CD4-positive, alpha-beta memory T cell (primary cell): ENCODE measurements at regions of chr2 and their contacts with region 1.

Region 1: GRCh38 chr2:177263451-177264208 is 897 bp downstream of the NFE2L2 start:
- DNase-seq: peak; percentile 93 to 97 (median 94)
- H3K4me3 ChIP-seq: peak overlapping the region; percentile 57 to 100
- H3K4me3 Mint-ChIP-seq: peak overlapping the region; percentile 93 to 98 (median 96)
- H3K27ac ChIP-seq: peak overlapping the region; percentile 100
- H3K27ac Mint-ChIP-seq: peak overlapping the region; percentile 94 to 100 (median 99)
- H3K4me1 ChIP-seq: peaks cover 59% of the 10 kb centered on the region
- H3K4me1 Mint-ChIP-seq: peaks cover 36 to 75% (median 53%) of the 10 kb centered on the region in 4 donors
- H3K27me3 ChIP-seq: no peaks in the 10 kb centered on the region
- H3K27me3 Mint-ChIP-seq: no peaks in the 10 kb centered on the region

Region 2: DNA sequence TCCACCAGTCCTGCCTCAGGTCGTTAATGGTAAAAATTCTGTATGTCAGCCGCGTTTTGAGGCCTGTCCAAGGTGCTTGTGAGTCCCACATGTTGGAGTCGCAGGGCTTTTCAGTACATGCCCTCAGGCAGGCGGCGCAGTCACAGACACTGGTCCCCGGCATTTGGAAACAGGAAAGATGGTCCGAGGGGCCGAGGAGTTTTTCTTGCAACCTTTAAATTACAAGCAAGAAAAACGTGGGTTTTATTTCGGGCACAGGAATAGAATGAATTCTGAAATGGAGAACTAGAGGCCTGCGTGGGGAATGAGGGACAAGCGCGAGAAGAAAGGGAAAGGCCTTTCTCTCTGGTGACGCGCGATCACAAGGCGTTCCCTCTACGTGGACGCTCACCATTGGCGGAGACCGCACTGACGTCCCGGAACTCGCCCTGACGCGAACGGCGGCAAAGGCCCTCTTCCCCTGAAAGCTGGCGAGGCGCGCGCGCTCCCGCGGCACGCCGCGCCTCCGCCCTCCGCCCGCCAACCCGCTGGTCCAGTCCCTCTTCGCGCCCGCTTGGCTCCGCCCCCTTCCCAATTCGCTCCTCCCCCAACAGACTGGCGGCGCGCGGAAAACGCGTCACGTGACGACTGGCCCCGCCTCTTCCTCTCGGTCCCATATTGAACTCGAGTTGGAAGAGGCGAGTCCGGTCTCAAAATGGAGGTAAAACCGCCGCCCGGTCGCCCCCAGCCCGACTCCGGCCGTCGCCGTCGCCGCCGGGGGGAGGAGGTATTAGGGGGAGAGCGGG is 51.3 kb before region 1 on chr2 and contains the start of gene HNRNPA3:
- CTCF ChIA-PET with region 1: interaction called, 35 read pairs
- POLR2A ChIA-PET with region 1: interaction called, 260 read pairs
- intact Hi-C with region 1: loop called (anchors 1 kb)
- DNase-seq: peak; percentile 99 to 100 (median 100)
- H3K4me3 ChIP-seq: peak within 1 kb of the TSS; percentile 98 to 99
- H3K4me3 Mint-ChIP-seq: peak within 1 kb of the TSS; percentile 86 to 98 (median 95)
- H3K27ac ChIP-seq: peak within 1 kb of the TSS; percentile 100
- H3K27ac Mint-ChIP-seq: peak within 1 kb of the TSS; percentile 98 to 100 (median 99)
- H3K4me1 ChIP-seq: peaks cover 55% of the 10 kb centered on the region
- H3K4me1 Mint-ChIP-seq: peaks cover 26 to 66% (median 38%) of the 10 kb centered on the region in 4 donors
- H3K27me3 ChIP-seq: no peaks in the 10 kb centered on the region
- H3K27me3 Mint-ChIP-seq: no peaks in the 10 kb centered on the region
- total RNA-seq, gene HNRNPA3: 172 to 175 TPM

Region 3: GRCh38 chr2:177247693-177248262 is 15.9 kb before region 1 on chr2:
- CTCF ChIA-PET with region 1: interaction called, 28 read pairs
- POLR2A ChIA-PET with region 1: interaction called, 51 read pairs
- intact Hi-C with region 1: no loop called
- DNase-seq: no peak
- H3K4me3 ChIP-seq: no peak overlapping the region
- H3K4me3 Mint-ChIP-seq: no peak overlapping the region
- H3K27ac ChIP-seq: no peak overlapping the region
- H3K27ac Mint-ChIP-seq: peak overlapping the region in 3 of 7 donors; percentile 13 to 60 (median 47)
- H3K4me1 ChIP-seq: peaks cover 79% of the 10 kb centered on the region
- H3K4me1 Mint-ChIP-seq: peaks cover 62 to 93% (median 74%) of the 10 kb centered on the region in 4 donors
- H3K27me3 ChIP-seq: no peaks in the 10 kb centered on the region
- H3K27me3 Mint-ChIP-seq: no peaks in the 10 kb centered on the region

Region 4: DNA sequence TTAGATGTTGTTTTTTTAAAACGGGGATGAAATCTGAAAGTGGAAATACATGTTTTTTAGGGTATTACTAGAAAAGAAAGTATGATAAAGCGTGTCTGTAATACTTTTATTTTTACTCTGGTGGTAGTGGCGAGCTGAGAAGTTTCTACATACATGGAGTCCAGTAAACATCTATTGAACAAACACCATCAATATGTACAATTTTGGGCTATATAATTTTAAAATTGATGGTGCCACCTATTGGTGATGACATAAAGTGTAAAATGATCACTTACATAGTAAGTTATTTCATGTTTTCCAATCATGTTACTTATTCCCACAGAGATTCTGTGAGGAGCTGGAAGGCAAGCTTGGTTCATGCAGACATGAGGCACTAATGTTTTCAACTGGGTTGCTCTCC is 32.4 kb after region 1 on chr2:
- CTCF ChIA-PET with region 1: interaction called, 143 read pairs
- POLR2A ChIA-PET with region 1: interaction called, 144 read pairs
- intact Hi-C with region 1: loop called (anchors 1 kb)
- DNase-seq: peak in 4 of 5 donors; percentile 34 to 49 (median 43)
- H3K4me3 ChIP-seq: no peak overlapping the region
- H3K4me3 Mint-ChIP-seq: peak overlapping the region in 1 of 8 donors; percentile 4
- H3K27ac ChIP-seq: no peak overlapping the region
- H3K27ac Mint-ChIP-seq: peak overlapping the region in 3 of 7 donors; percentile 16 to 72 (median 37)
- H3K4me1 ChIP-seq: peaks cover 9% of the 10 kb centered on the region
- H3K4me1 Mint-ChIP-seq: peaks cover 4 to 7% (median 5%) of the 10 kb centered on the region in 4 donors
- H3K27me3 ChIP-seq: no peaks in the 10 kb centered on the region
- H3K27me3 Mint-ChIP-seq: no peaks in the 10 kb centered on the region

Region 5: DNA sequence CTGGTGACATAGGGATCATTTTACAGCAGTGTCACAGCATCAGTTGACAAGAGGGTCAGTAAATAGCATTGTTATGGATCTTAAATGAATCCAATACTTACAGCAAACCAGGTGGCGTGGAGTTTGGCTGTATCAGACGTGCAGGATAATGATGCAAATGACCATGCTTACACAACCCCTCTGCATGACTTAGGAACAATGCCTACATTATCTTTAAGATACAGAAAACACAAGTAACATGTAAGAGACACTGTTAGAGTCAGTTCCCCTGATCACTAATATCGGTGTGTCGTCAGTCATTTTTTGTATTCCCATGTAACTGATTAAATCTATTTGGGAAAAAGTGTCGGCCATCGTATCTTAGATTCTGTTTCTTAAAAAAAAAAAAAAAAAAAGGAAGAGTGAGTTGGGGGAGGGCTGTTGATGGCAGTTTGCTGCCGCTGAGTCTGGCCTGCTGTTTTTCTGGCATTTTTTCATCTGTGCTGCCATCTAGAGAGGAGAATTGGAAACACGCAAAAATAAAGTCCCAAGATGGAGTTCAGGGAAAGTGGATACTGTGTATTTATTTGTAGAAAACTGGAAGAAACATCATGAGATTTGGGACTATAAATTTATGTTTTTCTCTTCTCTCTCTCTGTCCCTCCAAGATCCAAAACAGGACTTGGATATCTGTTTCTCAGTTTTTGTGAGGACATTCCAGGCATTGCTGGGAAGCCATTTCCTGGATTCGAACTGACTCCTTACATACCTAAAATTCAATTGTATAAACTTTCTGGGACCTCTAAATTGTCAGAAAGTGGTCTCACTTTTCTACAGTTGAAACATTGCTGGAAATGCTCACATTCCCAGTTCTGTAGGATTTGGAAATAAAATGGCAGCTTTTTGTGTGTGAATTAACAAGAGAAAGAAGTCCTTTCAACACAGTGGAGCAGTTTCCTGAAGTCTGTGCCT is 68.7 kb after region 1 on chr2:
- CTCF ChIA-PET with region 1: interaction called, 50 read pairs
- POLR2A ChIA-PET with region 1: interaction called, 34 read pairs
- intact Hi-C with region 1: loop called (anchors 1 kb)
- DNase-seq: peak in 4 of 5 donors; percentile 55 to 62 (median 60)
- H3K4me3 ChIP-seq: no peak overlapping the region
- H3K4me3 Mint-ChIP-seq: no peak overlapping the region
- H3K27ac ChIP-seq: no peak overlapping the region
- H3K27ac Mint-ChIP-seq: peak overlapping the region in 4 of 7 donors; percentile 33 to 78 (median 64)
- H3K4me1 ChIP-seq: peaks cover 10% of the 10 kb centered on the region
- H3K4me1 Mint-ChIP-seq: peaks cover 0 to 13% (median 6%) of the 10 kb centered on the region in 4 donors
- H3K27me3 ChIP-seq: no peaks in the 10 kb centered on the region
- H3K27me3 Mint-ChIP-seq: no peaks in the 10 kb centered on the region

Region 6: GRCh38 chr2:178084273-178084672 is 820.6 kb after region 1 on chr2:
- CTCF ChIA-PET with region 1: no interaction called
- POLR2A ChIA-PET with region 1: no interaction called
- intact Hi-C with region 1: no loop called
- DNase-seq: no peak
- H3K4me3 ChIP-seq: no peak overlapping the region
- H3K4me3 Mint-ChIP-seq: no peak overlapping the region
- H3K27ac ChIP-seq: no peak overlapping the region
- H3K27ac Mint-ChIP-seq: no peak overlapping the region
- H3K4me1 ChIP-seq: no peaks in the 10 kb centered on the region
- H3K4me1 Mint-ChIP-seq: no peaks in the 10 kb centered on the region
- H3K27me3 ChIP-seq: no peaks in the 10 kb centered on the region
- H3K27me3 Mint-ChIP-seq: peaks cover 6 to 17% of the 10 kb centered on the region in 2 donors

Region 7: GRCh38 chr2:178112202-178113152 is 848.8 kb after region 1 on chr2 and contains the start of gene RBM45:
- CTCF ChIA-PET with region 1: interaction called, 3 read pairs
- POLR2A ChIA-PET with region 1: no interaction called
- intact Hi-C with region 1: loop called (anchors 5 kb)
- DNase-seq: peak; percentile 76 to 82 (median 82)
- H3K4me3 ChIP-seq: peak within 1 kb of the TSS; percentile 80 to 92
- H3K4me3 Mint-ChIP-seq: peak within 1 kb of the TSS; percentile 87 to 96 (median 91)
- H3K27ac ChIP-seq: peak within 1 kb of the TSS; percentile 66
- H3K27ac Mint-ChIP-seq: peak within 1 kb of the TSS; percentile 82 to 95 (median 90)
- H3K4me1 ChIP-seq: peaks cover 28% of the 10 kb centered on the region
- H3K4me1 Mint-ChIP-seq: peaks cover 28 to 47% (median 39%) of the 10 kb centered on the region in 4 donors
- H3K27me3 ChIP-seq: no peaks in the 10 kb centered on the region
- H3K27me3 Mint-ChIP-seq: no peaks in the 10 kb centered on the region
- total RNA-seq, gene RBM45: 23.3 to 28.0 TPM